ENCODE measurements at regions of chr16 and their contacts with region 1.

Region 1: GRCh38 chr16:31507929-31508705 is at the start of gene RUSF1:
- DNase-seq: peak; percentile 65 to 89 (median 80)
- ATAC-seq: peak; percentile 87
- H3K4me3 ChIP-seq: peak within 1 kb of the TSS; percentile 97
- H3K4me3 Mint-ChIP-seq: peak within 1 kb of the TSS; percentile 94
- H3K27ac ChIP-seq: peak within 1 kb of the TSS; percentile 79 to 87
- H3K27ac Mint-ChIP-seq: peak within 1 kb of the TSS; percentile 98
- H3K4me1 ChIP-seq: peaks cover 40% of the 10 kb centered on the region
- H3K4me1 Mint-ChIP-seq: peaks cover 58% of the 10 kb centered on the region
- H3K27me3 ChIP-seq: no peaks in the 10 kb centered on the region
- H3K27me3 Mint-ChIP-seq: no peaks in the 10 kb centered on the region
- CTCF ChIP-seq: no peak
- total RNA-seq, gene RUSF1: 69.2 to 73.2 TPM

Region 2: DNA sequence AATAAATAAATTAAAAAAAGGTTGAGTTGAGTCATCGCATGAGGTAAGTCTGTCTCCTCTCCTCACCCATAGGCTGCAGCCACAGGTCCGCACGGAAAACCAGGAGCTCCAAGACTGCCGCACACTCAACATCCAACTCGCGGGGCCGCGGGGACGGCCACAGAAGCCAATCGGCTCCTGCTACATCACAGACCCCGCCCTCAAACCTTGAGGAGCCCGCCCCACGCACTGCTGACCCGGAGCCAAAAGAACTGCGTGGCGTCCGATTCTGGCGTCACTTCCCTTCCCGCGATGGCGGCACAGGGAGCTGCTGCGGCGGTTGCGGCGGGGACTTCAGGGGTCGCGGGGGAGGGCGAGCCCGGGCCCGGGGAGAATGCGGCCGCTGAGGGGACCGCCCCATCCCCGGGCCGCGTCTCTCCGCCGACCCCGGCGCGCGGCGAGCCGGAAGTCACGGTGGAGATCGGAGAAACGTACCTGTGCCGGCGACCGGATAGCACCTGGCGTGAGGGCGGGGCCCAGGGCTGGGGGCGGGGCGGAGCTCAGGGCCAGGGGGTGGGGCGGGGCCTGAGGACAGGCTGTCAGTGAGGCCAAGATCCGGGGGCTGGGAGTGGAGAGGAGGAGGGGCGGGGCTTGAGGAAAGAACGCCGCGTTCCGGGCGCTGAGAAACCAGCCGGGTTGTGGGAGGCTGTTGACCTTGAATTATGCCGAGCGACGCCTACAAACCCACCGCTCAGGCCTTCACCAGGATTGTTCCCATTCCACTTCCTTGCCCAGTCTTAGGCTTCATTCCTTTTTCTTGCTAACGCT is 390.5 kb before region 1 on chr16 and contains the start of gene KAT8:
- CTCF ChIA-PET with region 1: no interaction called
- POLR2A ChIA-PET with region 1: interaction called, 4 read pairs
- intact Hi-C with region 1: loop called in 1 of 2 experiments (anchors 5 kb)
- DNase-seq: peak; percentile 93 to 99 (median 96)
- ATAC-seq: peak; percentile 91
- H3K4me3 ChIP-seq: peak within 1 kb of the TSS; percentile 68
- H3K4me3 Mint-ChIP-seq: peak within 1 kb of the TSS; percentile 88
- H3K27ac ChIP-seq: peak within 1 kb of the TSS; percentile 87 to 95
- H3K27ac Mint-ChIP-seq: peak within 1 kb of the TSS; percentile 83
- H3K4me1 ChIP-seq: peaks cover 23% of the 10 kb centered on the region
- H3K4me1 Mint-ChIP-seq: peaks cover 17% of the 10 kb centered on the region
- H3K27me3 ChIP-seq: no peaks in the 10 kb centered on the region
- H3K27me3 Mint-ChIP-seq: no peaks in the 10 kb centered on the region
- CTCF ChIP-seq: no peak
- total RNA-seq, gene KAT8: 114 to 124 TPM

Region 3: GRCh38 chr16:31472709-31473203 is 35.4 kb before region 1 on chr16:
- CTCF ChIA-PET with region 1: no interaction called
- POLR2A ChIA-PET with region 1: interaction called, 32 read pairs
- intact Hi-C with region 1: no loop called
- DNase-seq: peak in 5 of 14 experiments; percentile 38 to 72 (median 51)
- ATAC-seq: peak; percentile 23
- H3K4me3 ChIP-seq: no peak overlapping the region
- H3K4me3 Mint-ChIP-seq: peak overlapping the region; percentile 76
- H3K27ac ChIP-seq: no peak overlapping the region
- H3K27ac Mint-ChIP-seq: no peak overlapping the region
- H3K4me1 ChIP-seq: peaks cover 51% of the 10 kb centered on the region
- H3K4me1 Mint-ChIP-seq: peaks cover 25% of the 10 kb centered on the region
- H3K27me3 ChIP-seq: peaks cover 10 to 24% of the 10 kb centered on the region in 2 experiments
- H3K27me3 Mint-ChIP-seq: peaks cover 13% of the 10 kb centered on the region
- CTCF ChIP-seq: no peak

Region 4: DNA sequence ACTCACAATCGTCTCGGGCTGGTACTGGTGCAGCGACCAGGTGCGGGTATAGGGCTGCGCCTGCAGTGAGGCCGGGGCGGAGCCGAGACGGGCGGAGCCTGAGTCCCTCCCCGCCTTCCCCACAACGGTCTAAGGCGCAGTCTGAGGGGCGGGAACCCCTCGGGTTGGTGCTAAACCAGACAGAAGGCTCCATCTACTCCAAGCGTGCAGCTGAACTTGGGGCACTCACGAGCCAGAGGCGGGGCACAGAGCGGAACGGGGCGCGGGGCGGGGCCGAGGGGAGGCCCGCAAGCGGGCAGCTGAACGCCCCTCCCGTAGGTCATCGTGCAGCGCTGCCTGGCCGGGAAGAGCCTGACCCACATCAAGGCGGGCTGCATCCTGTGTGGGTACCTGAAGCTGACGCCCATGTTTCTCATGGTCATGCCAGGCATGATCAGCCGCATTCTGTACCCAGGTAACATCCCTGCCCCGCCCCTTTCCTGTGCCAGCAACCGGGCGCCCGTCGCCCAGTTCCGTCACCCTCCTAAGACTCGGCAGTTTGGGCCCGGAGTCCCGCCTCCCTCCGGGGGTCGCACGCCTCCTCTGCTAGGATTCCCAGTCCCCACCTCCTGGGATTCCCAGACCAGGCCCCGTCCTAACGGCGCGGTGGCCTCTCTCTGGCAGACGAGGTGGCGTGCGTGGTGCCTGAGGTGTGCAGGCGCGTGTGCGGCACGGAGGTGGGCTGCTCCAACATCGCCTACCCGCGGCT is 20.2 kb before region 1 on chr16:
- CTCF ChIA-PET with region 1: interaction called, 5 read pairs
- POLR2A ChIA-PET with region 1: interaction called, 47 read pairs
- intact Hi-C with region 1: loop called in 1 of 2 experiments (anchors 1 kb)
- DNase-seq: peak; percentile 60 to 93 (median 74)
- ATAC-seq: peak; percentile 86
- H3K4me3 ChIP-seq: peak overlapping the region; percentile 89
- H3K4me3 Mint-ChIP-seq: peak overlapping the region; percentile 92
- H3K27ac ChIP-seq: peak overlapping the region; percentile 45 to 51
- H3K27ac Mint-ChIP-seq: peak overlapping the region; percentile 91
- H3K4me1 ChIP-seq: peaks cover 27% of the 10 kb centered on the region
- H3K4me1 Mint-ChIP-seq: peaks cover 13% of the 10 kb centered on the region
- H3K27me3 ChIP-seq: no peaks in the 10 kb centered on the region
- H3K27me3 Mint-ChIP-seq: no peaks in the 10 kb centered on the region
- CTCF ChIP-seq: no peak

Region 5: GRCh38 chr16:31700526-31701388 is 192.6 kb after region 1 on chr16:
- CTCF ChIA-PET with region 1: no interaction called
- POLR2A ChIA-PET with region 1: interaction called, 13 read pairs
- intact Hi-C with region 1: loop called (anchors 5 kb)
- DNase-seq: peak; percentile 67 to 93 (median 80)
- ATAC-seq: peak; percentile 72
- H3K4me3 ChIP-seq: peak overlapping the region; percentile 89
- H3K4me3 Mint-ChIP-seq: peak overlapping the region; percentile 96
- H3K27ac ChIP-seq: peak overlapping the region; percentile 88 to 92
- H3K27ac Mint-ChIP-seq: peak overlapping the region; percentile 99
- H3K4me1 ChIP-seq: peaks cover 45% of the 10 kb centered on the region
- H3K4me1 Mint-ChIP-seq: peaks cover 37% of the 10 kb centered on the region
- H3K27me3 ChIP-seq: no peaks in the 10 kb centered on the region
- H3K27me3 Mint-ChIP-seq: no peaks in the 10 kb centered on the region
- CTCF ChIP-seq: no peak

Region 6: DNA sequence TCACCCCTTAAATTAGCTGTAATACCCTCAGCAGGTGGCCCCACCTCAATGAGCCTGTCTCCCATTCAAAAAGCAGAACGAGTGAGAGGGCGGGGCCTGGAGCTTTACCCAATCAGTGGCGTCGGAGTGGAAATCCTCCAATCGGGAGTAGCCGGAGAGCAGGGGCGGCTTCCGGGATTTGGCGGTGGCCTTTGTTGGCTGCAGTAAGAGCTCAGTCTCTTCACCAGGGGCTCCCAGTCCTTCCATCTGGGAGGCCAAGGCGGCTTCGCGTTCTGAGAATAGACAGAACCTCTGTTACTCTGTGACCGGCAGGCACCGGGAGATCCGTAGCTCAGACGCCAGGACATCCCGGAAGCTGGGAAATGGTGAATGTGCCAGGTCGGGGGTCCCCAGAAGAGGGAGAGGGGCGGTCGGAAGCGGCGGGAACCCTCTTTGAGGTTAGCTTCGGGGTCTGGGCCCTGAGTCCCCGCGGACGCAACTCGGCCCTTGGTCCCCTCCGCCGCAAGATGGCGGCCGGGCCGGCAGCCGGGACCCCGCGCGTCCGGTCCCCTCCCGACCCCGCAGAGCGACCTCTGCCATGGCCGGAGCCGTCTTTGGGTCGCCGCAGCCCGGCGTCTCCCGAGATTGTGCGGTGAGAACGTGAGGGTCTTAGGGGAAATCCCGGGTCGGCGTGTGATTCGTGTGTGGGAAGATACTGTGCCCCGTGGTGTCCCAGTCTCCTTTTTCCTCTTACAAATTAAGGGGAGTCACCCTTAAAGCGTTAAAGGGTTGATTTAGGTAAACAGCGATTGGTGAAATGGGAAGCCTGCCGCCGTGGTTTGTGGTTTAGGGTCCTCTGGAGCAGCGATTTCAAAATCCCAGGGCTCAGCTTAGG is 205.2 kb after region 1 on chr16:
- CTCF ChIA-PET with region 1: no interaction called
- POLR2A ChIA-PET with region 1: interaction called, 11 read pairs
- intact Hi-C with region 1: loop called in 1 of 2 experiments (anchors 5 kb)
- DNase-seq: peak; percentile 81 to 94 (median 88)
- ATAC-seq: peak; percentile 82
- H3K4me3 ChIP-seq: peak overlapping the region; percentile 93
- H3K4me3 Mint-ChIP-seq: peak overlapping the region; percentile 100
- H3K27ac ChIP-seq: peak overlapping the region; percentile 83 to 87
- H3K27ac Mint-ChIP-seq: peak overlapping the region; percentile 96
- H3K4me1 ChIP-seq: peaks cover 33% of the 10 kb centered on the region
- H3K4me1 Mint-ChIP-seq: peaks cover 80% of the 10 kb centered on the region
- H3K27me3 ChIP-seq: no peaks in the 10 kb centered on the region
- H3K27me3 Mint-ChIP-seq: no peaks in the 10 kb centered on the region
- CTCF ChIP-seq: no peak

Measured in CD4-positive, alpha-beta T cell (primary cell).